ENCODE measurements at regions of chr1 and their contacts with region 1.

Region 1: GRCh38 chr1:26372039-26372438 is 511 bp downstream of the ZNF683 start:
- DNase-seq: no peak
- H3K4me3 ChIP-seq: peak overlapping the region in 1 of 2 donors; percentile 18
- H3K4me3 Mint-ChIP-seq: peak overlapping the region in 7 of 8 donors; percentile 8 to 81 (median 61)
- H3K27ac ChIP-seq: no peak overlapping the region
- H3K27ac Mint-ChIP-seq: peak overlapping the region; percentile 75 to 96 (median 86)
- H3K4me1 ChIP-seq: peaks cover 94% of the 10 kb centered on the region
- H3K4me1 Mint-ChIP-seq: peaks cover 60 to 86% (median 73%) of the 10 kb centered on the region in 4 donors
- H3K27me3 ChIP-seq: no peaks in the 10 kb centered on the region
- H3K27me3 Mint-ChIP-seq: no peaks in the 10 kb centered on the region

Region 2: DNA sequence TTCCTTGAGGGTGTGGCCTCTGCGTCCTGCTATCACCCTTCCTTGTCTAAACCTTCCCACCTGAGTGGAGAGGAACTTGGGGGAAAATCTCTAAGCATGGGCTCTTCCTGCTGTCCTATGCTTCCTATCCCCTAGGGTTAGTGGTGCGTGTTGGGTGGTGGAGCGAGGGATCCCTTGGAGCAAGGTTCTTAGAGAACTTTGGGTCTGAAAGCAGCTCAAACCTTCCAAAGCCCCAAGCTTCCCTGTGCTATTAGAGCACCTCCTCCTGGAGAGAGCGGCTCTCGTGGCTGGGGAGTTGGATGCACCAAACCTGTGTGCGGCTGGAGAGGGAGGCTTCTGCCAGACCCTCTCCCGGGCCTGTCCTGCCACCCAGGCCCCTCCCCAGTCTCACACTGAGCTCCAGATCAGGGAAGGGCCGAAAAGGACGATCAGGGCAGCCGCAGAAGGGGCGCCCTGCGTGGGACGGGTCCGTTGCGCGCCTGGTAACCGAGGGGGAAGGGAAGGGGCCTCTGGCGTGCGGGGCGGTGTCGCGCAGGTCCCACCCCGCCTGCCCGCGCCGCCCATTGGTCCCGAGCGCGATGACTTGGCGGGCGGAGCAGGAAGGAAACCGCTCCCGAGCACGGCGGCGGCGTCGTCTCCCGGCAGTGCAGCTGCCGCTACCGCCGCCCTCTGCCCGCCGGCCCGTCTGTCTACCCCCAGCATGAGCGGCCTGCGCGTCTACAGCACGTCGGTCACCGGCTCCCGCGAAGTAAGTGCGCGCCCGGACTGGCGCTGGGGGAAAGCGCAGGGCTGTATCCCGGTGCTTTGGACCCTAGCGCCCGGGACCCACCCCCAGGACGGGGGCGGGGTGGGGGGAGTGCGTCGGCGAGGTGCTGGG is 92.3 kb before region 1 on chr1 and contains the start of gene SH3BGRL3:
- CTCF ChIA-PET with region 1: interaction called, 307 read pairs
- POLR2A ChIA-PET with region 1: interaction called, 136 read pairs
- intact Hi-C with region 1: no loop called
- DNase-seq: peak; percentile 83 to 88 (median 86)
- H3K4me3 ChIP-seq: peak within 1 kb of the TSS; percentile 50 to 92
- H3K4me3 Mint-ChIP-seq: peak within 1 kb of the TSS; percentile 85 to 96 (median 90)
- H3K27ac ChIP-seq: peak within 1 kb of the TSS; percentile 82
- H3K27ac Mint-ChIP-seq: peak within 1 kb of the TSS; percentile 94 to 98 (median 97)
- H3K4me1 ChIP-seq: peaks cover 88% of the 10 kb centered on the region
- H3K4me1 Mint-ChIP-seq: peaks cover 58 to 90% (median 76%) of the 10 kb centered on the region in 4 donors
- H3K27me3 ChIP-seq: no peaks in the 10 kb centered on the region
- H3K27me3 Mint-ChIP-seq: no peaks in the 10 kb centered on the region
- total RNA-seq, gene SH3BGRL3: 293 to 305 TPM

Region 3: DNA sequence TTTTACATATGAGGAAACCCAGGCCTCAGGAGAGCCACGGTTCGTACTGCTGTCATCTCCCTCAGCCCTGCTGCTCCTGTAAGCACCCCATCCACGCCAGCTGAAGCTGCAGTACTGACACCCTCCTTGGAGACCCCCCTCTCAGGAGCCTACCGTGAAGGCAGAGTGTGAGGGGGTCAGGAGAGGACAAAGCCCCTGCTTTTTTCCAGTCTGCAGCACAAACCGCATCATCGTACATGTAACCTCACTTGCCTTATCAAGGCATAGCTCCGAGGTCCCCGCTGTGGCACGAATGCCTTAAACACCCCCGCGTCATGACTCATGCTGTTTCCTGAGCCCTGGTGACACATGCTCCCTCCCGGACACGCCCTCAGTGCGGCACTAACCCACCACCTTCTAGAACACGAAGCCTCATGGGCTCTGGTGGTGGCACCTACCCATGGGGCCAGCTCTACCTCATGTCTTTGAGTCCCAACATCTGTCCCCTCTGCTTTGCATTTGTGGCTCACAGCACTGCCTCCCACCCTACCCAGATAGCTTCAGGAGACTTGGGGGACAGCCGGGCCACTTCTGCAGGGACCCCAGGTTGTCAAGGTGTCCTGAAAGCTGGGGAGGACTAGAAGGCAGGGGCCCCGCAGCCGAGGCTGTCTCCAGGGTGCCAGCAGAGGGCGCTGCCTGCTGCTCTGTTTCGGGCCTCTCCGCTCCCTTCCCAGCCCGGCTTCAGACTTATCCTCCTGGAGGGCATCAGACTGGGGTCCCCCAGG is 87.3 kb before region 1 on chr1:
- CTCF ChIA-PET with region 1: interaction called, 307 read pairs
- POLR2A ChIA-PET with region 1: interaction called, 136 read pairs
- intact Hi-C with region 1: no loop called
- DNase-seq: peak; percentile 91 to 99 (median 92)
- H3K4me3 ChIP-seq: peak overlapping the region; percentile 38 to 50
- H3K4me3 Mint-ChIP-seq: peak overlapping the region; percentile 82 to 94 (median 89)
- H3K27ac ChIP-seq: peak overlapping the region; percentile 91
- H3K27ac Mint-ChIP-seq: peak overlapping the region; percentile 94 to 100 (median 99)
- H3K4me1 ChIP-seq: peaks cover 95% of the 10 kb centered on the region
- H3K4me1 Mint-ChIP-seq: peaks cover 63 to 96% (median 81%) of the 10 kb centered on the region in 4 donors
- H3K27me3 ChIP-seq: no peaks in the 10 kb centered on the region
- H3K27me3 Mint-ChIP-seq: no peaks in the 10 kb centered on the region

Region 4: DNA sequence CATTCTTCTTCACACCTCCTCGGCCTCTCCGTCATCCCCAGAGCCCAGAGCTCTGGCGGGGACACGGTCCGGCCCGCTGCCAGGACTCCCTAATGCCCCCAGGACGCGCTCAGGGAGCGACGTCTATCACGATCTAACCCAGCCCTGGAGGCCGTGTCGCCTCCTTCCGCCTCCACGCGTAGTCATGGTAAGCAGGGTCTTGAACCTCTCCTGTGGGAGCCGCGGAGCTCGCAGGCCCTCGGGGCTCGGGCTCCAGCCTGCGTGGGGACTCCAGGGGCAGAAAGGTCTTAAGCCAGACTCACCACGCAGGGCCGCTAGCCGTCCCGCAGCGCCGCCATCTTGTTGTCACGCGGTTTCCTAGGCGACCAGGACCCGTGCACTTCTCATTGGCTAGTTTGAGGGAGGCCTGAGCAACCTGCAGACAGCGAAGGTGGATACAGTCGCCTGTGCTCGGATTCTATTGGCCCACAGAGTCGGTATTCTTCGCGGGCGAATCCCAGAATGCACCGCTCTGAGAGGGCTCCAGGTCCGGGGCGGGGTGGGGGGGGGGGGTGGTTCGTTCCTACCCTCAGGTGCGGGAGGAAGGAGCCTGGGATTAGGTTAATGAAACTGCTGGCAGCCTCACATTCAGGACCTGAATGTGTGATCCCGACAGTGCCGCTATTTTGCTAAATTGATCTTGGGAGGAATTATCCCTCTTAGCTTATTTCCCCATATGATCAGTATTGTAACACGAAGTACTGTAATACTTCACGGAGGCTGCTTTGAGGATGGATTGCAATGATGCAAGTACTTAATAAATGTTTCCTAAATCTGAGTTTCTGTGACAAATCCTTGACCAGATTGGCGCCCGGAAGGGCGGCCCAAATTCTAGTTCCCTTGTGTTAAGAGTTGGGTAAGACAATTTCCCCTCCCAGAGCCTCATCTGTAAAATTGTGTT is 65.5 kb before region 1 on chr1 and contains the start of gene UBXN11:
- CTCF ChIA-PET with region 1: interaction called, 4 read pairs
- POLR2A ChIA-PET with region 1: interaction called, 13 read pairs
- intact Hi-C with region 1: no loop called
- DNase-seq: peak; percentile 90 to 97 (median 91)
- H3K4me3 ChIP-seq: peak within 1 kb of the TSS; percentile 69 to 86
- H3K4me3 Mint-ChIP-seq: peak within 1 kb of the TSS; percentile 95 to 99 (median 98)
- H3K27ac ChIP-seq: peak within 1 kb of the TSS; percentile 74
- H3K27ac Mint-ChIP-seq: peak within 1 kb of the TSS; percentile 92 to 99 (median 98)
- H3K4me1 ChIP-seq: peaks cover 42% of the 10 kb centered on the region
- H3K4me1 Mint-ChIP-seq: peaks cover 25 to 40% (median 33%) of the 10 kb centered on the region in 4 donors
- H3K27me3 ChIP-seq: no peaks in the 10 kb centered on the region
- H3K27me3 Mint-ChIP-seq: no peaks in the 10 kb centered on the region
- total RNA-seq, gene UBXN11: 115 to 117 TPM

Region 5: GRCh38 chr1:26358411-26359384 is 13.3 kb before region 1 on chr1:
- CTCF ChIA-PET with region 1: interaction called, 195 read pairs
- POLR2A ChIA-PET with region 1: interaction called, 174 read pairs
- intact Hi-C with region 1: loop called (anchors 1 kb)
- DNase-seq: peak; percentile 79 to 95 (median 81)
- H3K4me3 ChIP-seq: peak overlapping the region in 1 of 2 donors; percentile 44
- H3K4me3 Mint-ChIP-seq: peak overlapping the region; percentile 58 to 88 (median 74)
- H3K27ac ChIP-seq: peak overlapping the region; percentile 40
- H3K27ac Mint-ChIP-seq: peak overlapping the region; percentile 79 to 97 (median 94)
- H3K4me1 ChIP-seq: peaks cover 56% of the 10 kb centered on the region
- H3K4me1 Mint-ChIP-seq: peaks cover 27 to 70% (median 41%) of the 10 kb centered on the region in 4 donors
- H3K27me3 ChIP-seq: no peaks in the 10 kb centered on the region
- H3K27me3 Mint-ChIP-seq: no peaks in the 10 kb centered on the region

Measured in CD4-positive, alpha-beta memory T cell (primary cell).